ENCODE measurements at regions of chr12 and their contacts with region 1.

Region 1: DNA sequence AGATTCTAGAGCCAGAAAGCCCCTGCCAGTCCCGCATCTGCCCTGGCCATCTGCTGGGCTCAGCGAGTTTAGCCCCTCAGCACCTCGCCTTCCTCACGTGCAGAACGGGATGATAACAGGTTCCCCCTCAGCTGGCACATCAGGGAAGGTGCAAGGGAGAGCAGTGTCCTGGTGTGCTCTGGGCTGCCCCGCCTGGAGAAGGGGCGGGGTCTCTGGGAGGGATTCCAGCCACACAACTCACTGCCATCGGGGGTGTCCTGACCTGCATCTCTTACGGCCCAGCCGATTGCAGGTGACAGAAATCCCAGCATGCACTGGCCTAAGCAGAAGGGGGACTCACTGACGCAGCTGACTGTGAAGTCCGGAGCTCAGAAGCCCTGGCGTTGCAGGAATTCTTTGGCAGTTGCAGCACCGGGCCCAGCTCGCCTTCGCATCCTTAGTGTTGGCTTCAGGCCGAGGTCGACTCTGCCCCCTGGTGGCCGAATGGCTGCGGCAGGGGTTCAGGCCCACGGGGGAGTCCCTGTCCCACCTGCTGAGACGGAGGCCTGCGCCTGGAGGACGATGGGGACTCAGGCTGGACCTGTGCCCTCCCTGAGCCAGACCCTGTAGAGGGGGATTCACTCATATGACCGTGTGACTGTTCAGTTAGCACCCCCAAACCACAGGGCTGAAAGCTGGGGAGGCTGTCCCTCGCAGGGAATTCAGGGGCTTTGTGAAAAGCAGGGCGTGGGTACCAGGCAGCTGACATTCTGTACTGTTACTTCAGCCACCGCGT is 178.6 kb downstream of the ADGRD1 start:
- H3K4me3 Mint-ChIP-seq: no peak overlapping the region
- H3K27ac Mint-ChIP-seq: no peak overlapping the region
- H3K4me1 Mint-ChIP-seq: peaks cover 7% of the 10 kb centered on the region
- H3K27me3 Mint-ChIP-seq: peaks cover 11% of the 10 kb centered on the region

Region 2: DNA sequence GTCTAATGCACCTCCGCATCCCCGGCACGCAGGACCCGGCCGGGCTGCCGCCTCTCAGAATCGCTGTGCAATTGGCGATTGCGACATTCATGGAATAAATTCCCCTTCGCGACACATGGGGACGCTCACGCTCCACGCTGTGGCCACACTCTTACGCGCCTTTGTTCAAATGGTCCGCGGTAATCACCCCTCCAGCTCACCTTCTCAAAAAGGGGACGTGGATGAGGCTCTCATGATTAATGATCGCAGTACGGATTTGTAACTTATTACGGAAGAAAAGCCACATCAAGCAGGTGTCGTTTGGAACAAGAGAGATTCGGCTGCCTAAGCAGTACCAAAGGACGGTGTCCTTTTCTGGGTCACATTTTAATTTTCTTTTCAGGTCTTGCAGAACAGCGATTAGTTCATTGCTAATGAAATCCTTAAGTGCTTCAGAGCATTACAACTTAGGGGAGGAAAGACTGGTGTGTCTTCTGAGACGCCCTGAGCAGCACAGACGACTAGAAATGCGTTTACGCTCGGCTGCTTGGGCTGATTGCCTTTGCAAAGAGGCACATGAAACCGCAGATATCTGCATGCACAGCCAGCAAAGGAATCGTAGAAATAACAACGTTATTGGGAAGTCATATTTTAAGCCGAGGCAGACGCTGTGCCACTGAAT is 215.9 kb before region 1 on chr12:
- intact Hi-C with region 1: loop called (anchors 1 kb)
- H3K4me3 Mint-ChIP-seq: no peak overlapping the region
- H3K27ac Mint-ChIP-seq: no peak overlapping the region
- H3K4me1 Mint-ChIP-seq: peaks cover 7% of the 10 kb centered on the region
- H3K27me3 Mint-ChIP-seq: peaks cover 31% of the 10 kb centered on the region

Region 3: GRCh38 chr12:131104463-131105350 is 27.6 kb before region 1 on chr12:
- intact Hi-C with region 1: loop called (anchors 1 kb)
- H3K4me3 Mint-ChIP-seq: no peak overlapping the region
- H3K27ac Mint-ChIP-seq: no peak overlapping the region
- H3K4me1 Mint-ChIP-seq: peaks cover 28% of the 10 kb centered on the region
- H3K27me3 Mint-ChIP-seq: peaks cover 23% of the 10 kb centered on the region

Measured in dendritic cell treated with granulocyte-macrophage colony-stimulating factor and Interleukin-4, amounts not matched to agents 40 ng/mL and 50 ng/mL, for 4 days (primary cell).